ENCODE measurements at regions of chr4 and their contacts with region 1.

Region 1: DNA sequence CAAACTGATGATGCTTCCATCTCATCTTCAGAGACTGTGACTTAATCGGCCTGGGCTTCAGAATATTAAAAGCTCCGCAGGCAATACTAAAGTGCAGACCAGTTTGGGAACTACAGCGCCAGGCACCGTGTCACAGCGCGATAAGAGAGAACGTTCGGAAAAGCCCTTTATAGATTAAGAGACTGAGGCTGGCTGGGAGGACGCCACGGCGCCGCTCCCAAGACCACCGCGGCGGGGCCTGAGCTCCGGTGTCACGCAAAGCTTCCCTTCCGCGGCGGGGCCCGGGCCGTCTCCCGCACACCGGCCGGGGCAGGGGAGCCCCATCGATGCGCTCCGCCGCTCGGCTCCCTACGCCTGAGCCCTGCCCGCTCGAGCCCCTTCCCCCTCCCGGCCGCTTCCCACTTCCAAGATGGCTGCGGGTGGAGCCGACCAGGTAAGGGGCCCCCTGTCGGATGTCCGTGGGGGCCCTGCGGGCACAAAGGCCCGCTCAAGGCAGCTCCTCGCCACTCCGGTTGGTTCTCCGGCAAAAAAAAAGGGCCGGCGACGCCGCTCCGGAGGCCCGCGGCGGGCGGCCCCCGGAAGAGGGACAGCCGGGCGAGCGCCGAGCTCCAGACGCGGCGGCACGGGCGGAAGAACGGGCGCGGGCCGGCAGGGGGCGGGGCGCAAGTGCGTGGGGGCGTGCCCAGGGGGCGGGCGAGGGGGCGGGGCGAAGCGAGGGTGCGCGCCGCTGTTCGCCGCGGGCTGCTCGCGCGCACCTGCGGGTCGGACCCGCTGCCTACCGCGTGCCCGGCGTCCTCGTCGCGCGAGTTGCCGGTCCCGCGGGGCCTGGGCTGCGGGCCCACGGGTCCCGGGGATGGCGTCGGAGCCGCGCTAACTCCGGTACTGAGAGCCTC is at the start of gene TBC1D14:
- DNase-seq: peak; percentile 87
- ATAC-seq: peak; percentile 86
- H3K4me3 Mint-ChIP-seq: peak within 1 kb of the TSS; percentile 89
- H3K27ac Mint-ChIP-seq: peak within 1 kb of the TSS; percentile 91
- H3K4me1 Mint-ChIP-seq: peaks cover 51% of the 10 kb centered on the region
- H3K27me3 Mint-ChIP-seq: no peaks in the 10 kb centered on the region
- total RNA-seq, gene TBC1D14: 39.4 to 39.8 TPM

Region 2: DNA sequence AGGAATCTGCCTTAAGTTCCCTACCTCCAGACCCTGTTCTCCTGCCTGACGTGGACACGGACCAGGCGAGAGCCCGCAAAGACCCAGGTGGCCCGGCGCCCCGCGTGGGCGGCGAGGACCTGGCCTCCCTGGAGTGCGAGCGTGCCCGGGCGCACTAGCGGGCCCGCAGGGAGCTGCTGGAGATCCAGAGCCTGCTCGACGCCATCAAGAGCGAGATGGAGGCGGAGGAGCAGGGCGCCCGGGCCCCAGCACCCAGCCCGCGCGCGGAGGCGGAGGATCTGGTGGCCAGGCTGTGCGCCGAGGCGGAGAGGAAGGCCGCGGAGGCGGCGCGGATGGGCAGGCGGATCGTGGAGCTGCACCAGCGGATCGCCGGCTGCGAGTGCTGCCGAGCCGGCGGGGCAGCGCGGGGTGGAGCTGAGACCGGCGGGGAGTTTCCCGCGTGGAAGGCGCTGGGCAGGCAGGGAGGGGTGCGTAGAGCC is 250.7 kb before region 1 on chr4:
- CTCF ChIA-PET with region 1: no interaction called
- POLR2A ChIA-PET with region 1: no interaction called
- DNase-seq: peak; percentile 37
- ATAC-seq: peak; percentile 82
- H3K4me3 Mint-ChIP-seq: peak overlapping the region; percentile 63
- H3K27ac Mint-ChIP-seq: no peak overlapping the region
- H3K4me1 Mint-ChIP-seq: peaks cover 18% of the 10 kb centered on the region
- H3K27me3 Mint-ChIP-seq: peaks cover 31% of the 10 kb centered on the region

Region 3: DNA sequence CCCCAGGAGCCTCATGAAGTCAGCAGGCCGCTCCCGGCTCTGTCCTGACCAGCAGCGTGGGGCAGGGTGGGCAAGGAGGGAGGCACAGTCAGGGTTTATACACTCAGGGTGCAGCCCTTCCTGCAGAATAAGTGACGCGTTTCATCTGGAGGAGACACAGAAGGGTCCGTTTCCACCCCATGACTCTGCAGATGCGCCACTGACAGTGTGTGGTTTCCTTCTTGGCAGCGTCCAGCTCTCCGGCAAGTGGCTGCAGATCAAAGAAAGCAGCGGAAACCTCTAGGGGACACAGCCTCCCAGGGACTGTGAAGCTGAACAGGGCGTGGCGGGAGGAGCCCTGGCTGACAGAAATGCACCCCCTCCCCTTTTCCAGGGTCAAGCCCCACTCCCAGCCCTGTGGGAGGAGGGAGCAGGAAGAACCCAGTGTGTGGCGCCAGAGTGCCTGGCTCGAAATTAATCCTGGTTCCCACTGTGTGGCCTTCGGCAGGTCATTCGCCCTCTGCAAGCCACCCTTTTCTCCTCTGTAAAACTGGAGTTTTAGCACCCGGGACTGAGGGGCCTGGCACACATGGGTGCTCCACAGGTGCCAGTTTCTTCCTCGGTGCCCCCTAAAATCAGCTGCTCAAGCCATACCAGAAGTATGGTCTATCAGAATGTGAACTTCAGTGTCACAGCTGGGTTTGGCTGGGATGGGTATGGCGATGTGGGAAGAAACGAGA is 17.0 kb before region 1 on chr4:
- CTCF ChIA-PET with region 1: interaction called, 5 read pairs
- POLR2A ChIA-PET with region 1: interaction called, 36 read pairs
- DNase-seq: peak; percentile 76
- ATAC-seq: peak; percentile 85
- H3K4me3 Mint-ChIP-seq: peak overlapping the region; percentile 48
- H3K27ac Mint-ChIP-seq: peak overlapping the region; percentile 92
- H3K4me1 Mint-ChIP-seq: peaks cover 42% of the 10 kb centered on the region
- H3K27me3 Mint-ChIP-seq: no peaks in the 10 kb centered on the region

Region 4: GRCh38 chr4:6898763-6899162 is 10.6 kb before region 1 on chr4:
- CTCF ChIA-PET with region 1: interaction called, 39 read pairs
- POLR2A ChIA-PET with region 1: interaction called, 48 read pairs
- DNase-seq: no peak
- ATAC-seq: peak; percentile 31
- H3K4me3 Mint-ChIP-seq: peak overlapping the region; percentile 30
- H3K27ac Mint-ChIP-seq: peak overlapping the region; percentile 95
- H3K4me1 Mint-ChIP-seq: peaks cover 41% of the 10 kb centered on the region
- H3K27me3 Mint-ChIP-seq: no peaks in the 10 kb centered on the region

Region 5: GRCh38 chr4:6926681-6927478 is 17.6 kb after region 1 on chr4:
- CTCF ChIA-PET with region 1: interaction called, 15 read pairs
- POLR2A ChIA-PET with region 1: interaction called, 10 read pairs
- DNase-seq: peak; percentile 72
- ATAC-seq: peak; percentile 87
- H3K4me3 Mint-ChIP-seq: peak overlapping the region; percentile 44
- H3K27ac Mint-ChIP-seq: peak overlapping the region; percentile 65
- H3K4me1 Mint-ChIP-seq: peaks cover 58% of the 10 kb centered on the region
- H3K27me3 Mint-ChIP-seq: no peaks in the 10 kb centered on the region

Measured in activated CD8-positive, alpha-beta T cell treated with anti-CD3 and anti-CD28 coated beads, Interleukin-2, amount 10 ng/mL, durations not matched to agents 7 days and 5 days (primary cell).